Left cardiac atrium (tissue), 4 donors: ENCODE measurements at regions of chr1 and their contacts with region 1.

Region 1: DNA sequence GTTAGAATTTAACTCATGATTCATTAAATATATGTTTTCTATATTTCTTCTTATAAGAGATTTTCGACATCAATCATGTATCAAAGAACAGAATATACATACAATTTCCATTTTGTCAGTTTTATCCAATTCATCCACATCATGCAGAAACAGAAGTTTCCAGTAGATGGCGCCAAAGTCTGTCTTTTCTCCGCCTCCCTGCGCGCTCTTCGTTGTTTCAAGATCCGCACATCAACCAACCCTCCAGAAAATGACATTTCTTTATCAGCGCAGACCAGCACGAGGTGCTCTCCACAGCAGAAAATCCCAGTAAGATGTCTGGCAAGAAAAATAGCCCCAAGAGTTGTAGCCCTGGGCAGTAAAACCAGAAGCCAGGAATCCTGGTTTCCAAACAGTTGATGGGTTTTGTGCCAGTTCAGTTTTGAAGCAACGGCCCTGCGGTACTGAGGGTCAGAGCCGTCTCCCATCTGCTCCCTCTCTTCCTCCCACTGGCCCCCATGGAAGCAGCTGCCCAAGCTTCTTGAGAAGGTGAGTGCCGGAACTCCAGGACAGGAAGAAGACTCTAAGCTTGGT is 38.6 kb upstream of the GPR137B start:
- DNase-seq: peak; percentile 41
- ATAC-seq: peak; percentile 45 to 52

Region 2: GRCh38 chr1:236489710-236490377 is 386.1 kb after region 1 on chr1:
- intact Hi-C with region 1: loop called in 1 of 2 experiments (anchors 2 kb)
- DNase-seq: no peak
- ATAC-seq: peak; percentile 51 to 57

Region 3: DNA sequence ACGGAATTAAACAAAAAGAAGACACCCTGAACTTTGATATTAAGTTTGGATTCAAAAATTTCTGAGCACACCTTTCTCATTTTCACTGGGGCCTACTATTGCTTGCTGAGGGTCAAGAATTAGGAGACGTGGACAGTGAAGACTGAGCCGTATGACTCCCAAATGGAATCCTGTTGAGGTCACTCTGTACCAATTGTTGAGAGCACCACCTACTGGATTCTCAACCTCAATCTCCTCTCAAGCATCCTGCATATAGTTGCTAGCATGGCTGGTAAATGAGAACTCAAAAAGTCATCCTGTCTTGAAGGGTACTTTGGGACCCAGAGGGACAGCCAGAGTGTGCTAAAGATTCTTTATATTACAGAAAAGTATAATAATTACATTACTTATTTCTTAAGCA is 671.2 kb after region 1 on chr1:
- intact Hi-C with region 1: loop called in 1 of 2 experiments (anchors 10 kb)
- DNase-seq: no peak
- ATAC-seq: peak; percentile 76 to 77